ENCODE measurements at regions of chr4 and their contacts with region 1.

Region 1: GRCh38 chr4:168648929-168649328 is 152.1 kb downstream of the PALLD start:
- DNase-seq: no peak
- H3K4me3 ChIP-seq: no peak overlapping the region
- H3K27ac ChIP-seq: no peak overlapping the region
- H3K4me1 ChIP-seq: peaks cover 22 to 23% of the 10 kb centered on the region in 2 donors
- H3K27me3 ChIP-seq: no peaks in the 10 kb centered on the region
- CTCF ChIP-seq: no peak
- POLR2A ChIP-seq: no peak

Region 2: GRCh38 chr4:168304744-168305459 is 344.0 kb before region 1 on chr4:
- intact Hi-C with region 1: no loop called
- DNase-seq: no peak
- H3K4me3 ChIP-seq: no peak overlapping the region
- H3K27ac ChIP-seq: no peak overlapping the region
- H3K4me1 ChIP-seq: peaks cover 0 to 4% of the 10 kb centered on the region in 2 donors
- H3K27me3 ChIP-seq: no peaks in the 10 kb centered on the region
- CTCF ChIP-seq: no peak
- POLR2A ChIP-seq: no peak

Region 3: DNA sequence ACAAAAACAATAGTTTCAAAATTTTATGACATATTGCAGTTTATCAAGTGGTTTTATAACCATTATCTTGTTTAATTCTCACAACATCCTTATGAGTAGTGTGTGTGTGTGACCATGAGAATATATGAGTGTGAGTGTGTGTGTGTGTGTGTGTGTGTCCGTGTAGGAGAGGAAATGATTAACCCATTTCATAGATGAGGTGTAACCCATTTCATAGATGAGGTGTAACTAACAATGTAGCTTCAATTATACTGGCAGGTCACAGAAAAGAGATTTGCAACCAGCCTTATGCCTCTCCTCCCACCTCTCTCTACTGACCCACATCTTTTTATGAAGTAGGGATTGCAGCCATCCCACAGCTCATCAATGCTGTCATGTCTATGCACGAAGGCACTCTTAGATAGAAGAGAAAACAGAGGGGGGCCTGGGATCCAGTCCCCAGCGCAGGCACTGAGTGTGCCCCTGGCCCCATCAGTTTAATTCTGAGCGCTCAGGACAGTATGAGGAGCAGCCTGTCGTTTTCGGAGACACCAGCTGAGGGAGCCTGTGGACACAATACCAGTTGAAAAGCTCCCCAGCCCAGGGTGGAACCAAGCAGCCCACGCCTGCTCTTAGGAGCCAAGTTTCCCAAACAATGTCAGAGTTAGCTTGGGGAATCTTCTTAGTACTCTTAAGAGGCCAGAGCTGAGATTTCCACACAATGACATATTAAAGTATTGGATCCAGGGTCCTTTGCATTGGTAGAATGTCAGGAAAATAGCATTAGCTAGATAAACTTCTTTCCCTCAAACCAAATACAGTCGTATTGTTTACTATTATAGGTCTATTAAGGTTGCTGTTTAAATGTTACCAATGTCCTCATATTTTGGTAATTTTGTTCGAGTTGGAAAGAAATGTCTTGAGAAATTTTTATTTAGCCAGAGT is 63.5 kb before region 1 on chr4:
- intact Hi-C with region 1: loop called (anchors 10 kb)
- DNase-seq: peak; percentile 87 to 90
- H3K4me3 ChIP-seq: no peak overlapping the region
- H3K27ac ChIP-seq: no peak overlapping the region
- H3K4me1 ChIP-seq: peaks cover 3 to 14% of the 10 kb centered on the region in 2 donors
- H3K27me3 ChIP-seq: no peaks in the 10 kb centered on the region
- CTCF ChIP-seq: peak; percentile 45 to 82 (median 74)
- POLR2A ChIP-seq: no peak